ENCODE measurements at regions of chr20 and their contacts with region 1.

Region 1: GRCh38 chr20:17536944-17537444 is 5.8 kb upstream of the BFSP1 start:
- DNase-seq: peak; percentile 37 to 83 (median 67)
- ATAC-seq: peak; percentile 98
- H3K4me3 ChIP-seq: no peak overlapping the region
- H3K4me3 Mint-ChIP-seq: no peak overlapping the region
- H3K27ac ChIP-seq: no peak overlapping the region
- H3K27ac Mint-ChIP-seq: no peak overlapping the region
- H3K4me1 ChIP-seq: no peaks in the 10 kb centered on the region
- H3K4me1 Mint-ChIP-seq: peaks cover 3% of the 10 kb centered on the region
- H3K27me3 ChIP-seq: no peaks in the 10 kb centered on the region
- H3K27me3 Mint-ChIP-seq: peaks cover 14% of the 10 kb centered on the region
- CTCF ChIP-seq: peak; percentile 83

Region 2: DNA sequence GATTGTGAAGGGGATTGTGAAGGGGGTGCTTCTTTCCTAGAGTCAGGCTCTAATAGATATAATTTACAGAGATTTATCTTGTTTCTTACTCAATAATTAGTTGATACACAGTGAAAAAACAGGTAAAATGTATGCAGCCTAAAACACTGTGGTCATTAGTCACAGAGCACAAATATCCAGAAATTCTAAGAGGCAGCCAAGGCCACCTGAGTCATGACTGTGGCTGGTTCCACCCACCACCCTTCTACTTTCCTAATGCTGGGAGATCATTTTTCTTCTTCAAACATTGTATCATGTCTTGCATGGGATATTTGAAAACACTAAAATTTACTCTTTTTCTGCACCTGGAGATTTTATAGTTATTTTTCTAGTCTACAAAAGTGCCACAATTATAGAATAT is 607.2 kb before region 1 on chr20:
- CTCF ChIA-PET with region 1: no interaction called
- POLR2A ChIA-PET with region 1: no interaction called
- intact Hi-C with region 1: no loop called
- DNase-seq: no peak
- ATAC-seq: no peak
- H3K4me3 ChIP-seq: no peak overlapping the region
- H3K4me3 Mint-ChIP-seq: no peak overlapping the region
- H3K27ac ChIP-seq: no peak overlapping the region
- H3K27ac Mint-ChIP-seq: no peak overlapping the region
- H3K4me1 ChIP-seq: no peaks in the 10 kb centered on the region
- H3K4me1 Mint-ChIP-seq: no peaks in the 10 kb centered on the region
- H3K27me3 ChIP-seq: no peaks in the 10 kb centered on the region
- H3K27me3 Mint-ChIP-seq: no peaks in the 10 kb centered on the region
- CTCF ChIP-seq: no peak

Region 3: GRCh38 chr20:17569616-17570346 is 32.8 kb after region 1 on chr20 and contains the start of gene DSTN:
- CTCF ChIA-PET with region 1: interaction called, 6 read pairs
- POLR2A ChIA-PET with region 1: no interaction called
- intact Hi-C with region 1: loop called in 1 of 2 experiments (anchors 2 kb)
- DNase-seq: peak; percentile 76 to 94 (median 86)
- ATAC-seq: peak; percentile 88
- H3K4me3 ChIP-seq: peak within 1 kb of the TSS; percentile 80 to 92
- H3K4me3 Mint-ChIP-seq: peak within 1 kb of the TSS; percentile 85
- H3K27ac ChIP-seq: peak within 1 kb of the TSS; percentile 73 to 81
- H3K27ac Mint-ChIP-seq: peak within 1 kb of the TSS; percentile 91
- H3K4me1 ChIP-seq: peaks cover 24% of the 10 kb centered on the region
- H3K4me1 Mint-ChIP-seq: peaks cover 28% of the 10 kb centered on the region
- H3K27me3 ChIP-seq: no peaks in the 10 kb centered on the region
- H3K27me3 Mint-ChIP-seq: no peaks in the 10 kb centered on the region
- CTCF ChIP-seq: no peak
- total RNA-seq, gene DSTN: 40.5 to 42.9 TPM

Region 4: GRCh38 chr20:17617551-17618223 is 80.7 kb after region 1 on chr20:
- CTCF ChIA-PET with region 1: interaction called, 32 read pairs
- POLR2A ChIA-PET with region 1: no interaction called
- intact Hi-C with region 1: loop called in 1 of 2 experiments (anchors 1 kb)
- DNase-seq: peak in 7 of 9 experiments; percentile 25 to 67 (median 58)
- ATAC-seq: peak; percentile 55
- H3K4me3 ChIP-seq: no peak overlapping the region
- H3K4me3 Mint-ChIP-seq: no peak overlapping the region
- H3K27ac ChIP-seq: no peak overlapping the region
- H3K27ac Mint-ChIP-seq: no peak overlapping the region
- H3K4me1 ChIP-seq: peaks cover 4% of the 10 kb centered on the region
- H3K4me1 Mint-ChIP-seq: peaks cover 7% of the 10 kb centered on the region
- H3K27me3 ChIP-seq: no peaks in the 10 kb centered on the region
- H3K27me3 Mint-ChIP-seq: no peaks in the 10 kb centered on the region
- CTCF ChIP-seq: peak; percentile 58

Region 5: GRCh38 chr20:17648791-17649730 is 112.1 kb after region 1 on chr20:
- CTCF ChIA-PET with region 1: interaction called, 13 read pairs
- POLR2A ChIA-PET with region 1: no interaction called
- intact Hi-C with region 1: loop called (anchors 1 kb)
- DNase-seq: peak in 8 of 9 experiments; percentile 9 to 59 (median 42)
- ATAC-seq: peak; percentile 73
- H3K4me3 ChIP-seq: no peak overlapping the region
- H3K4me3 Mint-ChIP-seq: no peak overlapping the region
- H3K27ac ChIP-seq: no peak overlapping the region
- H3K27ac Mint-ChIP-seq: no peak overlapping the region
- H3K4me1 ChIP-seq: no peaks in the 10 kb centered on the region
- H3K4me1 Mint-ChIP-seq: peaks cover 7% of the 10 kb centered on the region
- H3K27me3 ChIP-seq: no peaks in the 10 kb centered on the region
- H3K27me3 Mint-ChIP-seq: no peaks in the 10 kb centered on the region
- CTCF ChIP-seq: peak; percentile 26

Region 6: GRCh38 chr20:17710379-17711266 is 173.6 kb after region 1 on chr20:
- CTCF ChIA-PET with region 1: no interaction called
- POLR2A ChIA-PET with region 1: no interaction called
- intact Hi-C with region 1: no loop called
- DNase-seq: no peak
- ATAC-seq: no peak
- H3K4me3 ChIP-seq: no peak overlapping the region
- H3K4me3 Mint-ChIP-seq: no peak overlapping the region
- H3K27ac ChIP-seq: no peak overlapping the region
- H3K27ac Mint-ChIP-seq: no peak overlapping the region
- H3K4me1 ChIP-seq: no peaks in the 10 kb centered on the region
- H3K4me1 Mint-ChIP-seq: no peaks in the 10 kb centered on the region
- H3K27me3 ChIP-seq: no peaks in the 10 kb centered on the region
- H3K27me3 Mint-ChIP-seq: peaks cover 3% of the 10 kb centered on the region
- CTCF ChIP-seq: no peak

Region 7: GRCh38 chr20:17898548-17898994 is 361.6 kb after region 1 on chr20:
- CTCF ChIA-PET with region 1: interaction called, 16 read pairs
- POLR2A ChIA-PET with region 1: no interaction called
- intact Hi-C with region 1: loop called (anchors 1 kb)
- DNase-seq: peak; percentile 34 to 79 (median 63)
- ATAC-seq: peak; percentile 85
- H3K4me3 ChIP-seq: no peak overlapping the region
- H3K4me3 Mint-ChIP-seq: no peak overlapping the region
- H3K27ac ChIP-seq: no peak overlapping the region
- H3K27ac Mint-ChIP-seq: no peak overlapping the region
- H3K4me1 ChIP-seq: peaks cover 4% of the 10 kb centered on the region
- H3K4me1 Mint-ChIP-seq: peaks cover 5% of the 10 kb centered on the region
- H3K27me3 ChIP-seq: peaks cover 0 to 4% of the 10 kb centered on the region in 2 experiments
- H3K27me3 Mint-ChIP-seq: peaks cover 20% of the 10 kb centered on the region
- CTCF ChIP-seq: peak; percentile 93

Region 8: GRCh38 chr20:17938871-17939619 is 402.1 kb after region 1 on chr20:
- CTCF ChIA-PET with region 1: interaction called, 6 read pairs
- POLR2A ChIA-PET with region 1: no interaction called
- intact Hi-C with region 1: loop called (anchors 2 kb)
- DNase-seq: peak; percentile 17 to 81 (median 57)
- ATAC-seq: peak; percentile 95
- H3K4me3 ChIP-seq: no peak overlapping the region
- H3K4me3 Mint-ChIP-seq: peak overlapping the region; percentile 50
- H3K27ac ChIP-seq: no peak overlapping the region
- H3K27ac Mint-ChIP-seq: peak overlapping the region; percentile 71
- H3K4me1 ChIP-seq: peaks cover 12% of the 10 kb centered on the region
- H3K4me1 Mint-ChIP-seq: peaks cover 16% of the 10 kb centered on the region
- H3K27me3 ChIP-seq: no peaks in the 10 kb centered on the region
- H3K27me3 Mint-ChIP-seq: no peaks in the 10 kb centered on the region
- CTCF ChIP-seq: peak; percentile 87

Region 9: DNA sequence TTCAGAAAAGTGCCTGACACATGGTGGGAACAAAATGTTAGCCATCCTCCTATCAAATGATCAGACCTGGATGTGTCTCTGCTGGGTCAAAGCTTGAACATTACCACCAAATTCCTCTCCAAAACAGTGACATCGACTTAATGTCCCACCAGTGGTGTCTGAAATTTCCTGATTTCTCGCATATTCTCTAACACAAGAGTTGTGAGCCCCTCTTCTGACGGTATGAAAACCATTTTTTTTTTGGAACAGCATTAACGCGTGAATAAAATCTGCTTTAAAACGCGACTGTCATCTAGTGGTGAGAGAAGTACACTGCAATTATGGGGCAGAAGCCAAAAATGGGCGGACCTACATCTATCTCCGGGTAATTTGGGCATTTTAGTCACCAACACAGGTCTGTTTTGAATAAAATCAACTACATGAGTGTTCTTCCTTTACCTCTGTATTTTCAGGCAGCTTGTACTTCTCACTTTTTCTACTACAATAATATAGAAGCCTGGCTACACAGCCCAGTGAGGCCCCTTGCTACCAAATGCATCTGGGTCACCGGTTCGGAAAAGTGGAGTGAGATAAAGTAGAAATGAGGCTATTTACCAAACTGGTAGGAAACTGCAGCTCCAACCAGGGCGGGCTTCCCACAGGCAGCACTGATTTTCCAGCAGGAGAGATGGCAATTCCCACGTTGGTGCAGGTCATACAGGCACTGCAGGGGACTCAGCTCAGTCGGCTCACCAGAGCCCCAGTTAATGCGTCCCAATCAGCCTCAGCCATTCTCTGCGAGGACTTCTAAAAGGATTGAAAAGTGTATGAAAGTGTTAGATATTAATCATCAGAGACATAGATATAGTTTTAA is 459.2 kb after region 1 on chr20:
- CTCF ChIA-PET with region 1: interaction called, 6 read pairs
- POLR2A ChIA-PET with region 1: no interaction called
- intact Hi-C with region 1: loop called in 1 of 2 experiments (anchors 1 kb)
- DNase-seq: peak in 6 of 9 experiments; percentile 11 to 78 (median 38)
- ATAC-seq: peak; percentile 97
- H3K4me3 ChIP-seq: no peak overlapping the region
- H3K4me3 Mint-ChIP-seq: no peak overlapping the region
- H3K27ac ChIP-seq: no peak overlapping the region
- H3K27ac Mint-ChIP-seq: no peak overlapping the region
- H3K4me1 ChIP-seq: no peaks in the 10 kb centered on the region
- H3K4me1 Mint-ChIP-seq: peaks cover 9% of the 10 kb centered on the region
- H3K27me3 ChIP-seq: no peaks in the 10 kb centered on the region
- H3K27me3 Mint-ChIP-seq: peaks cover 19% of the 10 kb centered on the region
- CTCF ChIP-seq: peak; percentile 97